ENCODE measurements at regions of chr16 and their contacts with region 1.

Region 1: DNA sequence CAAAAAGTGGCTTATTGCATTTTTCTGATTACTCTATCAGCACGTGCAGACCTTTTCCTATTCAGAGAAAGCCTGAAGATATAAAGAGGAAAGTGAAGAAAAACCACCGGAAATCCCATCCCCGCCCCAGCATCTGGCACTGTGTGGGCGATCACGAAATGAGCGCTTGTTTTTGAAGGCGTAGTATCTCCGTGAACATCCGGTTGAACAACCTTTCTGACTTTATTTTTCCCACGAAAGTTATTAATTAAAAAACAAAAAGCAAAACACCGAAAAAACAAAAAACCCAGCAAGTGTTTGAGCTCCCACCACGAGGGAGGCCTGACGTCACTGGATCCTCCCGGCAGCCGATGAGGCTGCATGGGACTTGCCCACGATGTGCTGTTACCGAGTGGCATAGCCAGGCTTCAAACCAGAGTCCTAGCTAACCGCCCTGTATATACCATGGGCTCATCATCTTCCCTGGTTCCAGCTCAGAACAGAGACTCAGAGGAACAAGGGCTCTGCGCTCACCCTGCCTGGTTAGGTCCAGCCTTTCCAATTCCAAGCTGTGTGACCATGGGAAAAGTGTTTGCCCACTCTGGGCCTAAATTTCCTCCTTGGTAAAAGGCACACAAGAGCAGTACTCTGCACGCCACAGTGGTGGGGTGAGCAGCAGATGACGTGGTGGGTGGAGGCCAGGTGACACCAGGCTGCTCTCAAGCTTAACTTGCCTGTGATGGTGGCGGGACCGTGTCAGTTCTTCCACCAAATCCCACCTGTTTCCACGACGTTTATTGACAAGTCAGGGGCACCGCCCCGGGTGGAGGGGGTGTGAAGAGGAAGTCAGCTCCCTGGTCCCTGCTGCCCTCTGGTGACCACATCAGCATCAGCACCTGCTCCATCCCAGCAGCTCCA is 34.3 kb upstream of the IL21R start:
- DNase-seq: peak; percentile 83
- ATAC-seq: peak; percentile 68
- H3K4me3 Mint-ChIP-seq: peak overlapping the region; percentile 72
- H3K27ac Mint-ChIP-seq: peak overlapping the region; percentile 97
- H3K4me1 Mint-ChIP-seq: peaks cover 47% of the 10 kb centered on the region
- H3K27me3 Mint-ChIP-seq: no peaks in the 10 kb centered on the region

Region 2: GRCh38 chr16:27174007-27174406 is 193.7 kb before region 1 on chr16:
- POLR2A ChIA-PET with region 1: interaction called, 24 read pairs
- DNase-seq: peak; percentile 63
- ATAC-seq: peak; percentile 70
- H3K4me3 Mint-ChIP-seq: peak overlapping the region; percentile 40
- H3K27ac Mint-ChIP-seq: peak overlapping the region; percentile 91
- H3K4me1 Mint-ChIP-seq: peaks cover 57% of the 10 kb centered on the region
- H3K27me3 Mint-ChIP-seq: no peaks in the 10 kb centered on the region

Region 3: GRCh38 chr16:27179500-27180072 is 188.1 kb before region 1 on chr16:
- POLR2A ChIA-PET with region 1: interaction called, 24 read pairs
- DNase-seq: peak; percentile 90
- ATAC-seq: peak; percentile 95
- H3K4me3 Mint-ChIP-seq: no peak overlapping the region
- H3K27ac Mint-ChIP-seq: peak overlapping the region; percentile 50
- H3K4me1 Mint-ChIP-seq: peaks cover 31% of the 10 kb centered on the region
- H3K27me3 Mint-ChIP-seq: peaks cover 4% of the 10 kb centered on the region

Region 4: GRCh38 chr16:27313422-27314160 is 54.1 kb before region 1 on chr16 and contains the start of gene IL4R:
- POLR2A ChIA-PET with region 1: interaction called, 45 read pairs
- DNase-seq: peak; percentile 84
- ATAC-seq: peak; percentile 30
- H3K4me3 Mint-ChIP-seq: peak within 1 kb of the TSS; percentile 93
- H3K27ac Mint-ChIP-seq: peak within 1 kb of the TSS; percentile 99
- H3K4me1 Mint-ChIP-seq: peaks cover 32% of the 10 kb centered on the region
- H3K27me3 Mint-ChIP-seq: peaks cover 5% of the 10 kb centered on the region
- total RNA-seq, gene IL4R: 215 TPM

Region 5: DNA sequence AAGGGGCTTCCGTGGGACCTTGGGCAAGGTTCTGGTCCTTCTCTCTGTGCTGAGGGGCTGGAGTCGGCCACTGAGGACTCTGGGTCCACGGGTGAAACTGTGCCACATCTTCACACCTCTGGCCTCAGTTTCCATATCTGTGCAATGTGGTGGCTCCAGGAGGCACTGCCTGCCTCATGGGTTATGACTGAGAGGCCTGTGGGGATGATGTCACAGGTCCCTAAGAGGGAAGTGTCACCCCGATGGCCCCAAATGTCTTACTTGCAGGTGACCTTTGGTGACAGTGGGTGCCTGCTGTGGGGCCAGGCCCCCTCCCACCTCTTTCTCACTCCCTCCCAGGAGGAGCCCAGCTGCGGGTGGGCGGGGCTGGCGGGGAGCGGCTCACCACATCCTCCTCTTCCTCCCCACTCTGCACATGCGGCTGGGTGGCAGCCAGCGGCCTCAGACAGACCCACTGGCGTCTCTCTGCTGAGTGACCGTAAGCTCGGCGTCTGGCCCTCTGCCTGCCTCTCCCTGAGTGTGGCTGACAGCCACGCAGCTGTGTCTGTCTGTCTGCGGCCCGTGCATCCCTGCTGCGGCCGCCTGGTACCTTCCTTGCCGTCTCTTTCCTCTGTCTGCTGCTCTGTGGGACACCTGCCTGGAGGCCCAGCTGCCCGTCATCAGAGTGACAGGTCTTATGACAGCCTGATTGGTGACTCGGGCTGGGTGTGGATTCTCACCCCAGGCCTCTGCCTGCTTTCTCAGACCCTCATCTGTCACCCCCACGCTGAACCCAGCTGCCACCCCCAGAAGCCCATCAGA is 34.3 kb after region 1 on chr16 and contains the start of gene IL21R:
- POLR2A ChIA-PET with region 1: interaction called, 17 read pairs
- DNase-seq: peak; percentile 87
- ATAC-seq: peak; percentile 69
- H3K4me3 Mint-ChIP-seq: peak within 1 kb of the TSS; percentile 91
- H3K27ac Mint-ChIP-seq: peak within 1 kb of the TSS; percentile 95
- H3K4me1 Mint-ChIP-seq: peaks cover 56% of the 10 kb centered on the region
- H3K27me3 Mint-ChIP-seq: no peaks in the 10 kb centered on the region
- total RNA-seq, gene IL21R: 27.2 to 27.5 TPM

Region 6: DNA sequence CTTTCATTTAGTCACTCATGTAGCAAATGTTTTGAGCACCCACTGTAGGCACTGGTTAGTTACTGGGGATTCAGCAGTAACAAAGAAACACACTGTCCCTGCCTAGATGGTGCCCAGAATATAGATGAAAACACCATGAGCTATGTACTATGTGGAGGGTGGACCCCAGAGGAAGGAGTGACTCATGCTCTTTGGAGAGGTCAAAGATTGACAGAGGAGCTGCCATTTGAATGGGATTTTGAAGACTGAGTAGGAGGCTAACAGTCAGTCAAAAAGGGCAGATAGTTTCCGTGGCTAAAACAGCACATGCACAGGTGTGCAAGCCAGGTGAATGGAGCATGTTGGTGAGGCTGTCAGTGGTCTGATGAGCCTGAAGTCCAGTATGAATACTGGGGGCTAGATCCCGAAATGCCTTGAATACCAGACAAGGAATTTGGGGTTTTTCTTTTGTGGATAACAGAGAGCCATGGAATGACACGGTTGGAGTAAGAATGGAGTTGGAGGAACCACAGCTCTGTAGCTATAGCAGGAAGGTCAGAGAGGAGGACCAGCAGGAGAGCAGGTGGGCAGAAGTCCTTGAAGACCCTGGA is 40.4 kb after region 1 on chr16:
- POLR2A ChIA-PET with region 1: interaction called, 17 read pairs
- DNase-seq: no peak
- ATAC-seq: peak; percentile 46
- H3K4me3 Mint-ChIP-seq: peak overlapping the region; percentile 58
- H3K27ac Mint-ChIP-seq: peak overlapping the region; percentile 94
- H3K4me1 Mint-ChIP-seq: peaks cover 65% of the 10 kb centered on the region
- H3K27me3 Mint-ChIP-seq: no peaks in the 10 kb centered on the region

Region 7: DNA sequence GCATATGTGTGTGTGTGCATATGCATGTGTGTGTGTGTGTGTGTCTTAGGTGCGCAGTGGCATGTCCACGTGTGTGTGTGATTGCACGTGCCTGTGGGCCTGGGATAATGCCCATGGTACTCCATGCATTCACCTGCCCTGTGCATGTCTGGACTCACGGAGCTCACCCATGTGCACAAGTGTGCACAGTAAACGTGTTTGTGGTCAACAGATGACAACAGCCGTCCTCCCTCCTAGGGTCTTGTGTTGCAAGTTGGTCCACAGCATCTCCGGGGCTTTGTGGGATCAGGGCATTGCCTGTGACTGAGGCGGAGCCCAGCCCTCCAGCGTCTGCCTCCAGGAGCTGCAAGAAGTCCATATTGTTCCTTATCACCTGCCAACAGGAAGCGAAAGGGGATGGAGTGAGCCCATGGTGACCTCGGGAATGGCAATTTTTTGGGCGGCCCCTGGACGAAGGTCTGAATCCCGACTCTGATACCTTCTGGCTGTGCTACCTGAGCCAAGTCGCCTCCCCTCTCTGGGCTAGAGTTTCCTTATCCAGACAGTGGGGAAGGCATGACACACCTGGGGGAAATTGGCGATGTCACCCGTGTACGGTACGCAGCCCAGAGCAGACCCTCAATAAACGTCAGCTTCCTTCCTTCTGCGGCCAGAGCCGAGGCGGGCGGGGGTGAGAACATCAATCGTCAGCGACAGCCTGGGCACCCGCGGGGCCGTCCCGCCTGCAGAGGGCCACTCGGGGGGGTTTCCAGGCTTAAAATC is 81.9 kb after region 1 on chr16:
- POLR2A ChIA-PET with region 1: interaction called, 11 read pairs
- DNase-seq: peak; percentile 77
- ATAC-seq: peak; percentile 71
- H3K4me3 Mint-ChIP-seq: peak overlapping the region; percentile 64
- H3K27ac Mint-ChIP-seq: peak overlapping the region; percentile 85
- H3K4me1 Mint-ChIP-seq: peaks cover 52% of the 10 kb centered on the region
- H3K27me3 Mint-ChIP-seq: no peaks in the 10 kb centered on the region

Measured in activated naive CD8-positive, alpha-beta T cell treated with anti-CD3 and anti-CD28 coated beads, Interleukin-2, amount 10 ng/mL, durations not matched to agents 7 days and 5 days (primary cell).